K562 (cell line): ENCODE measurements at regions of chr9 and their contacts with region 1.

Region 1: DNA sequence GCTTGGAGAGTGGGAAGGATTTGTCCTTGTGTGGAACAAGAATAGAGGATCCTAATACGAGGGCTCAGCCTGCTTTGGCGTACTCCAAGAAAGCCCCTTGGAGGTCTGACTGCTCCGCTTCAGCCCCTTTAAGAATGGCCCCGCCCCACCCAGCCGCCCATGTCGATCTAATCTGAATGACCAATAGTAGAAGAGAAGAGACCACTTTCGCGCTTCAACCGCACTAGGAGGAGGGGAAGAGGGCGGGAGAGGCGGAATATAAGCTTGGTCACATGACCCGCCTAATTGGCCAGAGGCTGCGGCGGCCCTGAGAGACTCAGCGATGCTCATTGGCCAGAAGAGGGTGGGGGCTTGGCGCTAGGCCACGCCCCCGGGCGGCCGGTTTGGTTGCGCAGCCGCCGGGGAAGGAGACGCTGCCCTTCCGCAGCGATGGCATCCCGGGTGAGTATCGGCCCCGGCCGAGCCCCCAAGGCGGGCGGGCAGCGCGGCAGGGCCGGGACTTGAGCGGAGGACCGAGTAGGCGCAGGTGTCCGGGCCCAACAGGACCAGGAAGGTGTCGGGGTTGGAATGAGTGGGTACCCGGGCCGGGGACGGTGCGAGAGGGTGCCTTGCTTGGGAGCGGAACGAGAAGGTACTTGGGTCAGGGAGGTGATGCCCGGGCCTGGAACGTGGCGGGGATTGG is at the start of gene MIGA2:
- DNase-seq: peak; percentile 95 to 99 (median 97)
- ATAC-seq: peak; percentile 93
- H3K4me3 ChIP-seq: peak within 1 kb of the TSS; percentile 73
- H3K27ac ChIP-seq: peak within 1 kb of the TSS; percentile 82
- H3K4me1 ChIP-seq: peaks cover 44 to 64% of the 10 kb centered on the region in 2 experiments
- H3K27me3 ChIP-seq: no peaks in the 10 kb centered on the region
- CTCF ChIP-seq: no peak
- EP300 ChIP-seq: peak; percentile 6; the same call in 1 of the 2 replicates
- POLR2A ChIP-seq: peak; percentile 78
- RAD21 ChIP-seq: no peak
- polyA plus RNA-seq, gene MIGA2: 0.15 to 0.77 TPM

Region 2: GRCh38 chr9:129068990-129069861 is 32.8 kb after region 1 on chr9:
- CTCF ChIA-PET with region 1: interaction called, 3 read pairs
- POLR2A ChIA-PET with region 1: interaction called, 3 read pairs
- in situ Hi-C with region 1: no loop called
- intact Hi-C with region 1: loop called (anchors 1 kb)
- DNase-seq: peak; percentile 83 to 98 (median 90)
- ATAC-seq: peak; percentile 98
- H3K4me3 ChIP-seq: no peak overlapping the region
- H3K27ac ChIP-seq: peak overlapping the region; percentile 92
- H3K4me1 ChIP-seq: peaks cover 44 to 54% of the 10 kb centered on the region in 2 experiments
- H3K27me3 ChIP-seq: no peaks in the 10 kb centered on the region
- CTCF ChIP-seq: peak; percentile 26 to 47 (median 36); a peak in 4 of 6 replicates
- EP300 ChIP-seq: peak; percentile 97
- POLR2A ChIP-seq: no peak
- RAD21 ChIP-seq: peak in 1 of 2 experiments; percentile 18; a peak in 1 of 4 replicates

Region 3: DNA sequence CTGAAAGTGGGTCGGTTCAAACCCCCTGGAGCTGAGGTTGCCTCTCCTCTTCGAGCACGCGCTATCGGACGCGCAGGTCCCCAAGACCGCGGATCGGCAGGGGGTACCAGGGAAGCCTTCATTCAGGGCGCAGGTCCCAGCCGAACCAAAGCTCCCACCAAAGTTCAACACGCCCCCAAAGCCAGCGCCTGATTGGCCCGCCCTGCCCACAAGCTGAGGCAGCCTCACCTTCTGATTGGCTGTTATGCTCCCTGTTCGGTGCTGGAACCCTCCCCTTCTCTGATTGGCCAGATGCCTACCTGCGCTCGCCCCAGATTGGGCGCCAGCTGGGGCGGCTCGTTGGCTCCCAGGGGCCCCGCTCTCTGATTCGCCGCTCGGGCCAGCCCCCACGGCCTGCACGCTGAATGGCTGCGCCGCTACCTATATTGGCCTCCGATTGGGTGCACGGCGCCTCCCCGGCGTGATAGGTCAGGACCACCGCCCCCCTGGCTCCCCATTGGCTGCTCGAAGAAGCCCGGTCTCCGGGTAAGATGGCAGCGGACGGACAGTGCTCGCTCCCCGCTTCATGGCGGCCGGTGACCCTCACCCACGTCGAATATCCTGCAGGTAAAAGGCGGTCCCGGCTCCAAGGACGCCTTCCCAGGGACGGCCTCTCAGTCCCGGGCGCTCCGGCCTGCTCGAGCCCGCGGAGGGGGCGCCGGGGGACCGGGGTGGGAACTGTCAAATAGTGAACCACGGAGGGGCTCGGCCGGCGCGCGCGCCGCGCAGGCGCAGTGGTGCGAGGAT is 44.4 kb after region 1 on chr9 and contains the start of gene DOLPP1:
- CTCF ChIA-PET with region 1: no interaction called
- POLR2A ChIA-PET with region 1: interaction called, 3 read pairs
- in situ Hi-C with region 1: no loop called
- intact Hi-C with region 1: loop called (anchors 5 kb)
- DNase-seq: peak; percentile 99 to 100 (median 100)
- ATAC-seq: peak; percentile 98
- H3K4me3 ChIP-seq: peak within 1 kb of the TSS; percentile 67
- H3K27ac ChIP-seq: peak within 1 kb of the TSS; percentile 79
- H3K4me1 ChIP-seq: peaks cover 4 to 48% of the 10 kb centered on the region in 2 experiments; a peak in 4 of 5 replicates
- H3K27me3 ChIP-seq: no peaks in the 10 kb centered on the region
- CTCF ChIP-seq: no peak
- EP300 ChIP-seq: no peak
- POLR2A ChIP-seq: peak; percentile 97
- RAD21 ChIP-seq: 0 out of 4 replicates have a peak, but pooled peaks of 1 of the 2 experiments have one; percentile 0
- polyA plus RNA-seq, gene DOLPP1: 3.0 to 19.2 TPM